ENCODE measurements at regions of chr19 and their contacts with region 1.

Region 1: DNA sequence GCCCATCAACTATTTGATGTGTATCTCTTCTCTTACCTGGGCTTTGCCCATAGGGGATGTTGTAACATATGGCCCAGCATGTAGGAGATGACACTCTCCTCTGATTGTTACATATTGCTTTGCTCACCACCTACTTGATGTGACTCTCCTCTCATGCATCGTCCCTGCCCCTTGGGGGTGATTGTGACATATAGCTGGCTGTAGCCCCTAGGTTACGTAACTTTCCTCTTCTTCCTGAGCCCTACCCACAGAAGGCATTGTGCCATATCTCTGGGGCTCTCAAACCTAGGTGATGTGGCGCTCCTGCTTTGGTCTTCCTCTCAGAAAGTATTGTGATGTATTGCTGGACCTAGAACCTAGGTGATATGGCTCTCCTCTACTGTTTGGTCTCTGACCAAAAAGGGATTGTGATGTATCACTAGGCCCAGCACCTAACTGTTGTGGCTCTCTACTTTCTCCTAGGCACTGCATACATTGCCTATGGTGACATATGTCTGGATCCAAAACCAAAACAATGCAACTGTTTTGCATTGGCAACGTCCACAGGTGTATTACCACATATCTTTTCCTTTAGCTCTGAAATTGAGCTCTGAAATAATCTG is 71.9 kb upstream of the ZNF724 start:
- DNase-seq: no peak
- H3K4me3 ChIP-seq: no peak overlapping the region
- H3K27ac ChIP-seq: no peak overlapping the region
- H3K4me1 ChIP-seq: no peaks in the 10 kb centered on the region
- H3K27me3 ChIP-seq: no peaks in the 10 kb centered on the region
- CTCF ChIP-seq: no peak
- EP300 ChIP-seq: no peak
- POLR2A ChIP-seq: no peak

Region 2: GRCh38 chr19:23470873-23471545 is 149.0 kb after region 1 on chr19:
- intact Hi-C with region 1: loop called (anchors 1 kb)
- DNase-seq: peak in 1 of 2 donors; percentile 15
- H3K4me3 ChIP-seq: peak overlapping the region in 1 of 4 donors; percentile 13
- H3K27ac ChIP-seq: no peak overlapping the region
- H3K4me1 ChIP-seq: no peaks in the 10 kb centered on the region
- H3K27me3 ChIP-seq: peaks cover 0 to 29% (median 4%) of the 10 kb centered on the region in 3 donors
- CTCF ChIP-seq: no peak
- EP300 ChIP-seq: no peak
- POLR2A ChIP-seq: no peak

Measured in stomach (tissue), 19 donors.